ENCODE measurements at regions of chr3 and their contacts with region 1.

Region 1: DNA sequence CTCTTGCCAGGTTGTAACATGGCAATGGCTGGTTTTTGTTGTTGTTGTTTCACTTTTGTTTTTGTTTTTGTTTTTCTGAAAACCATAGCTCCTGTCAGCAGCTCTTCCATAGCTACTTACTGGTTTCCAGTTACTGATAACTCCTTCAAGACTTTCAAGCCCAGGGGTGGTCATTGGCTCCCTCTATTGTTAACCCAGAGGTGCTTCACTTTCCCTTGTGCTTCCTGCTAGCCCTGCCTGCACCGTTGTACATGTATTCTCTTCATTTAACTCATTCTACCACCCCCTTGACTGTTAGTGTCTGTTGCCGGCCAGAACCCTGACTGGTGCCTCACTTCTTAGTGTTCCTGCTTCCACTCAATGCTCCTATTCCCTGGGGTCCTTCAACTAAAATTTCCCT is 4.2 kb upstream of the TRAT1 start:
- DNase-seq: peak; percentile 74 to 82 (median 77)
- H3K4me3 ChIP-seq: no peak overlapping the region
- H3K4me3 Mint-ChIP-seq: peak overlapping the region in 6 of 8 donors; percentile 15 to 60 (median 34)
- H3K27ac ChIP-seq: no peak overlapping the region
- H3K27ac Mint-ChIP-seq: peak overlapping the region; percentile 23 to 78 (median 73)
- H3K4me1 ChIP-seq: peaks cover 37% of the 10 kb centered on the region
- H3K4me1 Mint-ChIP-seq: peaks cover 23 to 42% (median 27%) of the 10 kb centered on the region in 4 donors
- H3K27me3 ChIP-seq: no peaks in the 10 kb centered on the region
- H3K27me3 Mint-ChIP-seq: no peaks in the 10 kb centered on the region

Region 2: DNA sequence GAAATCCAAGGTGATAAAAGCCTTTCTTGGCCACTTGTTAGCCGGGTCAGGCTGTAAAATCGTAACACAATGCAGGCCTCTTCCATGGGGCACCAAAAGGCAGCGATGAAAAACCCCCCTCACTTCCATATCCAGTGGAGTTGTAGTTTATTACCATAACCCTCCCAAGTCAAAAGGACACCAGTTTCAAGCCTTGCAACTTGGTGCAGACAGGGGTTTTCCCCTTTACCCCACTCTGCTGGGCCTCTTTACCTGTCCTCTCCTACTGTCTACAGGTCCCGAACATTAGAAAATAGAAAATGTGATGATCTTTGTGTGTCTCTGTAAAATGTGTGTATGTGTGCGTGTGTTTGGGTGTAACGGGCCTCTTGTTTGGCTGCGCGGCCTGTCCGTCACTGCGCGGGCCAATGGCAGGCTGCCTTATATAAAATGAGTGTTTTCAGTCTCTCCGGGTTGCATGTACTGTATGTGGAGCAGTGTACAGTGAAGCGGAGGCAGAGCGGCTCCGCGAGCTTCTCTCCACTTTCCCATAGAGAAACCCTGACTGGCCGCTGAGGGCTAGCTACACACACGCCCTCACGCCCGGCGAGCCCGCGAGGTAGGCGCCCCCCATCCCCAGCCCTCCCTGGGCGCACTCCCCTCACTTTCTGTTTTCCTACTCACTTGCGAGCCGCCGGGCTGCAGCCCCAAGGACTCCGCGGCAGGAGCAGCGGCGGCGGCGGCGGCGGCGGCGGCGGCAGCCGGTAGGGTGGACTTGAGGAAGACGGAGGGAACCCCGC is 1295.7 kb before region 1 on chr3 and contains the start of gene BBX:
- CTCF ChIA-PET with region 1: no interaction called
- POLR2A ChIA-PET with region 1: no interaction called
- intact Hi-C with region 1: loop called (anchors 10 kb)
- DNase-seq: peak; percentile 92 to 98 (median 96)
- H3K4me3 ChIP-seq: peak within 1 kb of the TSS; percentile 70 to 88
- H3K4me3 Mint-ChIP-seq: peak within 1 kb of the TSS; percentile 97 to 99 (median 98)
- H3K27ac ChIP-seq: peak within 1 kb of the TSS; percentile 87
- H3K27ac Mint-ChIP-seq: peak within 1 kb of the TSS; percentile 88 to 98 (median 97)
- H3K4me1 ChIP-seq: peaks cover 29% of the 10 kb centered on the region
- H3K4me1 Mint-ChIP-seq: peaks cover 21 to 29% (median 25%) of the 10 kb centered on the region in 4 donors
- H3K27me3 ChIP-seq: no peaks in the 10 kb centered on the region
- H3K27me3 Mint-ChIP-seq: no peaks in the 10 kb centered on the region
- total RNA-seq, gene BBX: 93.9 to 99.1 TPM

Region 3: GRCh38 chr3:107756649-107757048 is 1061.8 kb before region 1 on chr3:
- CTCF ChIA-PET with region 1: no interaction called
- POLR2A ChIA-PET with region 1: no interaction called
- intact Hi-C with region 1: no loop called
- DNase-seq: no peak
- H3K4me3 ChIP-seq: no peak overlapping the region
- H3K4me3 Mint-ChIP-seq: no peak overlapping the region
- H3K27ac ChIP-seq: no peak overlapping the region
- H3K27ac Mint-ChIP-seq: no peak overlapping the region
- H3K4me1 ChIP-seq: no peaks in the 10 kb centered on the region
- H3K4me1 Mint-ChIP-seq: peaks cover 0 to 4% (median 2%) of the 10 kb centered on the region in 4 donors
- H3K27me3 ChIP-seq: no peaks in the 10 kb centered on the region
- H3K27me3 Mint-ChIP-seq: no peaks in the 10 kb centered on the region

Region 4: GRCh38 chr3:108489771-108490170 is 328.6 kb before region 1 on chr3:
- CTCF ChIA-PET with region 1: interaction called, 11 read pairs
- POLR2A ChIA-PET with region 1: no interaction called
- intact Hi-C with region 1: loop called (anchors 1 kb)
- DNase-seq: peak; percentile 56 to 64 (median 60)
- H3K4me3 ChIP-seq: no peak overlapping the region
- H3K4me3 Mint-ChIP-seq: no peak overlapping the region
- H3K27ac ChIP-seq: no peak overlapping the region
- H3K27ac Mint-ChIP-seq: no peak overlapping the region
- H3K4me1 ChIP-seq: no peaks in the 10 kb centered on the region
- H3K4me1 Mint-ChIP-seq: peaks cover 0 to 4% (median 2%) of the 10 kb centered on the region in 4 donors
- H3K27me3 ChIP-seq: no peaks in the 10 kb centered on the region
- H3K27me3 Mint-ChIP-seq: peaks cover 0 to 2% of the 10 kb centered on the region in 2 donors

Region 5: DNA sequence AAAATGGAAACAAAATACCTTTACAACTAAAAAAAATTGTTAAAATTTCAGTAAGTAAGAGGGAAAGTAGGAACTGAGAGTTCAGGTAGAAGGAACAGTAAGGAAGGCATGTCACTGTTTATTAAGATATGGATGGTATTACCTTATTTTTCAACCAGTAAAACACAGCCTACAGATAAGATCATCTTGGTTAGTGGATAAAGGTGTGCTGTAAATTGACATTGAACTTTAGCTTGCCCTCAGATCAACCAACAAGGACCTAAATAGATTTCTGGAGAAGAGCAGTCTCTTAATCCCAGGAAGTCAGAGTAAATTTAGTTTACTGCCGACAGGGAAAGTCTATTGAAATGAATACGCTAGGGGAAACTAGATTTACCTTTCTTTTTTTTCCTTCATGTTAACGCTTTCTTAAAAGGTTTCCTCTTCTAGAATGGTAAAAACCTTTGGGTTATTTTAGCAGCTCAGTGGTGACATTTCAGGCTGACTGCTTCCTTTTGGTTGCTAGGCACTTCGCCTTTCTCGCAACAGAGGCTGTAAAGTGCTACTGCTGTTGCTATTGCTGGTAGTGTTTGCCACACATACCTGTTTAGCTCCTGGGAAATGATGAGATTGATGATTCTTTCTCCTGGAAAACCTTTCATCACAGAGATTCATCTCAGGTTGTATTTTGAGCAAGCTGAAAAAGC is 216.0 kb before region 1 on chr3:
- CTCF ChIA-PET with region 1: interaction called, 16 read pairs
- POLR2A ChIA-PET with region 1: interaction called, 8 read pairs
- intact Hi-C with region 1: loop called (anchors 5 kb)
- DNase-seq: peak; percentile 38 to 63 (median 50)
- H3K4me3 ChIP-seq: peak overlapping the region in 1 of 2 donors; percentile 27
- H3K4me3 Mint-ChIP-seq: peak overlapping the region; percentile 54 to 86 (median 82)
- H3K27ac ChIP-seq: peak overlapping the region; percentile 56
- H3K27ac Mint-ChIP-seq: peak overlapping the region; percentile 63 to 99 (median 91)
- H3K4me1 ChIP-seq: peaks cover 59% of the 10 kb centered on the region
- H3K4me1 Mint-ChIP-seq: peaks cover 37 to 68% (median 43%) of the 10 kb centered on the region in 4 donors
- H3K27me3 ChIP-seq: no peaks in the 10 kb centered on the region
- H3K27me3 Mint-ChIP-seq: no peaks in the 10 kb centered on the region

Region 6: GRCh38 chr3:108767253-108767652 is 51.2 kb before region 1 on chr3:
- CTCF ChIA-PET with region 1: interaction called, 25 read pairs
- POLR2A ChIA-PET with region 1: no interaction called
- intact Hi-C with region 1: loop called (anchors 5 kb)
- DNase-seq: no peak
- H3K4me3 ChIP-seq: no peak overlapping the region
- H3K4me3 Mint-ChIP-seq: no peak overlapping the region
- H3K27ac ChIP-seq: no peak overlapping the region
- H3K27ac Mint-ChIP-seq: no peak overlapping the region
- H3K4me1 ChIP-seq: no peaks in the 10 kb centered on the region
- H3K4me1 Mint-ChIP-seq: no peaks in the 10 kb centered on the region
- H3K27me3 ChIP-seq: no peaks in the 10 kb centered on the region
- H3K27me3 Mint-ChIP-seq: peaks cover 0 to 2% of the 10 kb centered on the region in 2 donors

Region 7: GRCh38 chr3:108862865-108863798 is 44.7 kb after region 1 on chr3:
- CTCF ChIA-PET with region 1: interaction called, 8 read pairs
- POLR2A ChIA-PET with region 1: interaction called, 7 read pairs
- intact Hi-C with region 1: loop called (anchors 5 kb)
- DNase-seq: peak; percentile 20 to 52 (median 36)
- H3K4me3 ChIP-seq: no peak overlapping the region
- H3K4me3 Mint-ChIP-seq: peak overlapping the region in 7 of 8 donors; percentile 8 to 69 (median 44)
- H3K27ac ChIP-seq: peak overlapping the region; percentile 55
- H3K27ac Mint-ChIP-seq: peak overlapping the region; percentile 65 to 94 (median 90)
- H3K4me1 ChIP-seq: peaks cover 37% of the 10 kb centered on the region
- H3K4me1 Mint-ChIP-seq: peaks cover 39 to 57% (median 43%) of the 10 kb centered on the region in 4 donors
- H3K27me3 ChIP-seq: no peaks in the 10 kb centered on the region
- H3K27me3 Mint-ChIP-seq: no peaks in the 10 kb centered on the region

Measured in CD4-positive, alpha-beta memory T cell (primary cell).